ENCODE measurements at regions of chr4 and their contacts with region 1.

Region 1: DNA sequence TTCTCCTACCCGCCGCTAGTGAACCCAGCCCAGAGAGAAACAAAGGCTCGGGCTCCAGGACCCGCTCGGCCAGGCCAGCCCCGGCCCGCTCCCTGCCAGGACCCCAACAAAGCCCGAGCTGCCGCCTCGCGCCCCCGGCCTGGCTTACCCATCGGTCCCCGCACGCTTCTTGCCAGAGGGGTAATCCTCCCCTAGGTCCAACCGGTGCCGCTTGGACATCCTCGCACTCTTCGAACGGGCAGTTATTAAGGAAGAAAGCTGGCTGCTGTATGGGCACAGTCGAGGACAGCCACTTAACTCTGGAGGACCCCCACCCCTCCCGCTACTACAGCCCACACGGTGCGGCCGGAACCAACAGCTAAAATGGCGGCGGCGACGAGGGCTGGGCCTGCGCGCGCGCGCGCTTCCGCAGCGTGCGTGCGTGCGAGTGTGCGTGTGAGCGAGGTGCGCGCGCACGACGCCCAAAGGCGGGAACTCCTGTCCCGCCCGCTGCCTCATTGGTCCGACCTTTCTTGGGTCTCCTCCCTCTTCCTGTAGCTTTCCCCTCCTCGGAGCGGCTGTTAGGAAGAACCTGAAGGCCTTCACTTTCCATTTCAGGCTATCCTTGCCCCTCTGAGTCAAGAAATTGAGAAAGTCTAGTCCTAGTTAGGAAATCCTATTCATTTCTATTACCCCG is at the start of gene DHX15:
- DNase-seq: peak; percentile 96
- ATAC-seq: peak; percentile 94
- H3K4me3 ChIP-seq: peak within 1 kb of the TSS; percentile 78 to 100 (median 99)
- H3K4me3 Mint-ChIP-seq: peak within 1 kb of the TSS; percentile 94
- H3K27ac ChIP-seq: peak within 1 kb of the TSS; percentile 96 to 98
- H3K27ac Mint-ChIP-seq: peak within 1 kb of the TSS; percentile 97
- H3K4me1 ChIP-seq: peaks cover 17 to 19% of the 10 kb centered on the region in 2 donors
- H3K4me1 Mint-ChIP-seq: peaks cover 39% of the 10 kb centered on the region
- H3K27me3 ChIP-seq: no peaks in the 10 kb centered on the region
- H3K27me3 Mint-ChIP-seq: no peaks in the 10 kb centered on the region
- CTCF ChIP-seq: no peak
- total RNA-seq, gene DHX15: 154 and 162 TPM in 2 replicates

Region 2: GRCh38 chr4:24472514-24473308 is 111.6 kb before region 1 on chr4:
- CTCF ChIA-PET with region 1: no interaction called
- POLR2A ChIA-PET with region 1: no interaction called
- intact Hi-C with region 1: loop called (anchors 2 kb)
- DNase-seq: peak; percentile 80
- ATAC-seq: peak; percentile 67
- H3K4me3 ChIP-seq: peak overlapping the region in 4 of 5 experiments; percentile 35 to 65 (median 56)
- H3K4me3 Mint-ChIP-seq: peak overlapping the region; percentile 93
- H3K27ac ChIP-seq: no peak overlapping the region
- H3K27ac Mint-ChIP-seq: peak overlapping the region; percentile 26
- H3K4me1 ChIP-seq: peaks cover 30 to 33% of the 10 kb centered on the region in 2 donors
- H3K4me1 Mint-ChIP-seq: peaks cover 29% of the 10 kb centered on the region
- H3K27me3 ChIP-seq: peaks cover 0 to 51% (median 30%) of the 10 kb centered on the region in 4 experiments
- H3K27me3 Mint-ChIP-seq: peaks cover 70% of the 10 kb centered on the region
- CTCF ChIP-seq: peak; percentile 26

Region 3: DNA sequence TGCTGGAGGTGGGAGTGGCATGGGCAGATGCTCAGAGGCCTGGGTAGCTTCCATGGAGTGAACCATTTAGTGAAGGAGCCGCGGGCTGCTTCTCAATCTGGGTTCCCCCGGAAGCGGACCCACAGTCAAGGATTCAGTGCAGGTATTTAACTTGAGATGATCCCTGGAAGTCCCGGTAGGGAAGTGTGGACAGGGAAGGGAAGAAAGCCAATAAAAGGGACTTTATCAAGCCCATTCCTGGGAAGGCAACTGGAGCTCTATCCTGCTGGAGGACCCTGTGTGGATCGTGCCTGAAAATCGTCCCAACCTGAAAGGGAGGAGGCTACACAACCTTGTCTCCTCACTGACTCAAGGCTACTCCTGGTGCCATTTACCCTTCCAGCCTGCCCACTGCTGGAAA is 76.9 kb before region 1 on chr4:
- CTCF ChIA-PET with region 1: no interaction called
- POLR2A ChIA-PET with region 1: no interaction called
- intact Hi-C with region 1: no loop called
- DNase-seq: no peak
- ATAC-seq: no peak
- H3K4me3 ChIP-seq: no peak overlapping the region
- H3K4me3 Mint-ChIP-seq: no peak overlapping the region
- H3K27ac ChIP-seq: no peak overlapping the region
- H3K27ac Mint-ChIP-seq: no peak overlapping the region
- H3K4me1 ChIP-seq: no peaks in the 10 kb centered on the region
- H3K4me1 Mint-ChIP-seq: no peaks in the 10 kb centered on the region
- H3K27me3 ChIP-seq: peaks cover 0 to 3% (median 0%) of the 10 kb centered on the region in 4 experiments
- H3K27me3 Mint-ChIP-seq: no peaks in the 10 kb centered on the region
- CTCF ChIP-seq: no peak

Region 4: GRCh38 chr4:24544208-24544988 is 39.9 kb before region 1 on chr4:
- CTCF ChIA-PET with region 1: no interaction called
- POLR2A ChIA-PET with region 1: no interaction called
- intact Hi-C with region 1: loop called (anchors 5 kb)
- DNase-seq: no peak
- ATAC-seq: no peak
- H3K4me3 ChIP-seq: no peak overlapping the region
- H3K4me3 Mint-ChIP-seq: no peak overlapping the region
- H3K27ac ChIP-seq: no peak overlapping the region
- H3K27ac Mint-ChIP-seq: no peak overlapping the region
- H3K4me1 ChIP-seq: no peaks in the 10 kb centered on the region
- H3K4me1 Mint-ChIP-seq: peaks cover 19% of the 10 kb centered on the region
- H3K27me3 ChIP-seq: no peaks in the 10 kb centered on the region
- H3K27me3 Mint-ChIP-seq: no peaks in the 10 kb centered on the region
- CTCF ChIP-seq: no peak

Region 5: GRCh38 chr4:24644983-24645764 is 60.9 kb after region 1 on chr4:
- CTCF ChIA-PET with region 1: no interaction called
- POLR2A ChIA-PET with region 1: no interaction called
- intact Hi-C with region 1: no loop called
- DNase-seq: no peak
- ATAC-seq: no peak
- H3K4me3 ChIP-seq: no peak overlapping the region
- H3K4me3 Mint-ChIP-seq: no peak overlapping the region
- H3K27ac ChIP-seq: no peak overlapping the region
- H3K27ac Mint-ChIP-seq: no peak overlapping the region
- H3K4me1 ChIP-seq: no peaks in the 10 kb centered on the region
- H3K4me1 Mint-ChIP-seq: no peaks in the 10 kb centered on the region
- H3K27me3 ChIP-seq: peaks cover 0 to 7% (median 4%) of the 10 kb centered on the region in 4 experiments
- H3K27me3 Mint-ChIP-seq: peaks cover 22% of the 10 kb centered on the region
- CTCF ChIP-seq: no peak

Region 6: GRCh38 chr4:25075851-25076250 is 491.5 kb after region 1 on chr4:
- CTCF ChIA-PET with region 1: no interaction called
- POLR2A ChIA-PET with region 1: no interaction called
- intact Hi-C with region 1: no loop called
- DNase-seq: no peak
- ATAC-seq: no peak
- H3K4me3 ChIP-seq: no peak overlapping the region
- H3K4me3 Mint-ChIP-seq: no peak overlapping the region
- H3K27ac ChIP-seq: no peak overlapping the region
- H3K27ac Mint-ChIP-seq: no peak overlapping the region
- H3K4me1 ChIP-seq: no peaks in the 10 kb centered on the region
- H3K4me1 Mint-ChIP-seq: no peaks in the 10 kb centered on the region
- H3K27me3 ChIP-seq: no peaks in the 10 kb centered on the region
- H3K27me3 Mint-ChIP-seq: peaks cover 23% of the 10 kb centered on the region
- CTCF ChIP-seq: no peak

Region 7: DNA sequence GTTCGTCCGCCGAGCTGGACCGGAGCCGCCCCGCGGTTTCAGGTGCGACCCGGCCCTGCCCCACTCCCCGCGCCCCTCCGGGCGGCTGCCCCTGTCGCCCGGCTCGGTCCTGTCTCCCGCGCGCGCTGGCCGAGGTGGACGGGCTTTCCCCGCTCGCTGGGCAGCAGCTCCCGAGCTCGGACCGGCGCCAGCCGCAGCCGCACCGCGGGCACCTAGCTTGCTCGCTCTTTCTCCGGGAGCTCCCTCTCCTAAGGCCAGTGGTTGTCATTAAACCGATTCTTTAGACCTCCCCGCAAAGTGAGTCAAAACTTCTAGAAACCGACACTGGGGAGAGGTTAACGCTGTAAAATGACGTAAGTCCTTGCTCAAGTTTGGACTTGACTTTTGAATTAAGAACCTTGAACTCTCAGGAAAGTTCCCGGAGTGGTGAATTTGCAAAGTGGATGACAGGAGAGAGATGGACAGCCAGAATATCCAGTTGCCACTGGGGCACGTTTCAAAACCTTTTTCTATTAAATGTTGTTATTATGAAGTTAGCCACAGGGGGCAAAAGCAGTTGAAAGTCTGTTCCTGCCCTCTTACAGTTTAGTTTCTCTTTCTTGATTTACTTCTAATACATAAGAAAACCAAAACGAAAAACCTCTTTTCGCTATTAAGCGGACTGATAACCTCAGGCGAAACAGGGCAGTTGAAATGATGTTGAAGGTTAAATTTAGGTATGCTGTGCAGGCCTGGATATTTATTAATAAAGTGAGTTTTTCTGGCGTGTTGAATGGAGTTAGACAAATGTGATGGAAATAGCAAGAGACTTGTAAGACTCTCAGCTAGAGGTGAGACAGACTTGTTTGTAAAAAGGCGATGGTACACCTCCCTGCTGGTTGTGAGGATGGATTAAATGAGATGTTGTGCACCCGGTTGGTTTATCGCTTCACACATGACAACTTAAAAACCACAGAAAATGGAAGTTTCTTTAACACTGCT is 650.4 kb after region 1 on chr4:
- CTCF ChIA-PET with region 1: no interaction called
- POLR2A ChIA-PET with region 1: no interaction called
- intact Hi-C with region 1: loop called (anchors 5 kb)
- DNase-seq: peak; percentile 85
- ATAC-seq: peak; percentile 50
- H3K4me3 ChIP-seq: peak overlapping the region; percentile 72 to 91 (median 79)
- H3K4me3 Mint-ChIP-seq: peak overlapping the region; percentile 85
- H3K27ac ChIP-seq: peak overlapping the region; percentile 84 to 85
- H3K27ac Mint-ChIP-seq: peak overlapping the region; percentile 82
- H3K4me1 ChIP-seq: peaks cover 25 to 29% of the 10 kb centered on the region in 2 donors
- H3K4me1 Mint-ChIP-seq: peaks cover 39% of the 10 kb centered on the region
- H3K27me3 ChIP-seq: no peaks in the 10 kb centered on the region
- H3K27me3 Mint-ChIP-seq: no peaks in the 10 kb centered on the region
- CTCF ChIP-seq: peak; percentile 59

Region 8: GRCh38 chr4:26583865-26584652 is 1999.7 kb after region 1 on chr4 and contains the start of gene TBC1D19:
- CTCF ChIA-PET with region 1: no interaction called
- POLR2A ChIA-PET with region 1: no interaction called
- intact Hi-C with region 1: loop called (anchors 5 kb)
- DNase-seq: peak; percentile 90
- ATAC-seq: peak; percentile 95
- H3K4me3 ChIP-seq: peak within 1 kb of the TSS; percentile 43 to 92 (median 82)
- H3K4me3 Mint-ChIP-seq: peak within 1 kb of the TSS; percentile 88
- H3K27ac ChIP-seq: peak within 1 kb of the TSS; percentile 85 to 87
- H3K27ac Mint-ChIP-seq: peak within 1 kb of the TSS; percentile 91
- H3K4me1 ChIP-seq: peaks cover 11 to 13% of the 10 kb centered on the region in 2 donors
- H3K4me1 Mint-ChIP-seq: peaks cover 26% of the 10 kb centered on the region
- H3K27me3 ChIP-seq: no peaks in the 10 kb centered on the region
- H3K27me3 Mint-ChIP-seq: peaks cover 7% of the 10 kb centered on the region
- CTCF ChIP-seq: no peak
- total RNA-seq, gene TBC1D19: 10.0 and 11.0 TPM in 2 replicates